ENCODE measurements at regions of chr7 and their contacts with region 1.

Region 1: GRCh38 chr7:143380255-143380645 is 895 bp upstream of the ZYX start:
- DNase-seq: peak; percentile 93
- ATAC-seq: peak; percentile 57
- H3K4me3 Mint-ChIP-seq: peak overlapping the region; percentile 82
- H3K27ac Mint-ChIP-seq: peak overlapping the region; percentile 89
- H3K4me1 Mint-ChIP-seq: peaks cover 39% of the 10 kb centered on the region
- H3K27me3 Mint-ChIP-seq: no peaks in the 10 kb centered on the region

Region 2: DNA sequence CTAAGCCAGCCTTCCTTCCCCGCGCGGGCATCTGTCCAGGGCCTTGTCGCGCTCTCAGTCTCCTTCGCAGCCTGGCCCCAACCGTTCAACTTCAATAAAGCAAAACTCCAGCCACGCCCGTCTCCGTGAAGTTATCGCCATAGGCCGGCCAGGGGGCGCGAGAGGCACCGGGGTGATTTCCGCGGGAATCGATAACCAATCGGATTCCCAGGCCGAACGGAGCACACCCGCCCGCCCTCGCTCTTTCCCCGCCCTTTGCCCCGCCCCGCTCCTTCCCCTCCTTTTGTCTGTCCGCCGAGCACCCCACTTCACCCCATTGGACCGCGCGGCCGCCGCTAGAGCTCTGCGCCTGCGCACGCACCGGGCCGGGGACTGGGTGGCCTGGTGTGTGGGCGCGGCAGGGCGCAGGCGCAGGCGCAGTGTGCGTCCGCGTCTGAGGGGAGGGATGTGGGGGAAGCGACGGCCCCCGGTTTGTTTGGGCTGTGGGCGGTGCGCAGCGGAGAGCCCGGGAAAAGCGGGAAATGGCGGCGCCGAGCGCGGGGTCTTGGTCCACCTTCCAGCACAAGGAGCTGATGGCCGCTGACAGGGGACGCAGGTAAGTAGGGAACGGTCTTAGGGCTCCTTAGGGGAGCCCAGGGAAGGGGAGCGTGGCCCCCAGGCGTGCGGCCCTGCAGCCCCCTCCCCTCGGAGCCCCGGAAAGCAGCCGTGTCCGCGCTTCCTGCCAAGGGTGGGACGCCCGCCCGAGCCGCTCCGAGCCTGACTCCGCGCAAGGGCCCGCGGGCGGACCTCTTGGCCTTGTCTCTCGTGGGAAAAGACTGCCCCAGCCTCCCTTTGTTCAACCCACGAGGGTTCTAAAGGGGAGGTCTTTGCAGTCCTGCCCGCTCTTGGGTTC is 92.1 kb before region 1 on chr7 and contains the start of gene CASP2:
- CTCF ChIA-PET with region 1: interaction called, 4 read pairs
- POLR2A ChIA-PET with region 1: no interaction called
- intact Hi-C with region 1: loop called (anchors 1 kb)
- DNase-seq: peak; percentile 100
- ATAC-seq: peak; percentile 94
- H3K4me3 Mint-ChIP-seq: peak within 1 kb of the TSS; percentile 89
- H3K27ac Mint-ChIP-seq: peak within 1 kb of the TSS; percentile 98
- H3K4me1 Mint-ChIP-seq: peaks cover 46% of the 10 kb centered on the region
- H3K27me3 Mint-ChIP-seq: no peaks in the 10 kb centered on the region
- total RNA-seq, gene CASP2: 91.1 to 106 TPM

Region 3: GRCh38 chr7:143362131-143363015 is 17.9 kb before region 1 on chr7 and contains the start of gene FAM131B:
- CTCF ChIA-PET with region 1: interaction called, 6 read pairs
- POLR2A ChIA-PET with region 1: no interaction called
- intact Hi-C with region 1: loop called (anchors 1 kb)
- DNase-seq: peak; percentile 60
- ATAC-seq: peak; percentile 74
- H3K4me3 Mint-ChIP-seq: peak within 1 kb of the TSS; percentile 77
- H3K27ac Mint-ChIP-seq: no peak within 1 kb of the TSS
- H3K4me1 Mint-ChIP-seq: peaks cover 3% of the 10 kb centered on the region
- H3K27me3 Mint-ChIP-seq: peaks cover 35% of the 10 kb centered on the region
- total RNA-seq, gene FAM131B: 1.7 to 1.8 TPM

Region 4: GRCh38 chr7:143408686-143409561 is 28.7 kb after region 1 on chr7 and contains the start of gene EPHA1:
- CTCF ChIA-PET with region 1: interaction called, 14 read pairs
- POLR2A ChIA-PET with region 1: interaction called, 7 read pairs
- intact Hi-C with region 1: loop called (anchors 1 to 2 kb)
- DNase-seq: peak; percentile 63
- ATAC-seq: peak; percentile 69
- H3K4me3 Mint-ChIP-seq: peak within 1 kb of the TSS; percentile 72
- H3K27ac Mint-ChIP-seq: peak within 1 kb of the TSS; percentile 68
- H3K4me1 Mint-ChIP-seq: peaks cover 54% of the 10 kb centered on the region
- H3K27me3 Mint-ChIP-seq: no peaks in the 10 kb centered on the region
- total RNA-seq, gene EPHA1: 2.4 to 2.8 TPM

Region 5: GRCh38 chr7:143901668-143902331 is 521.5 kb after region 1 on chr7 and contains the start of gene TCAF1:
- CTCF ChIA-PET with region 1: no interaction called
- POLR2A ChIA-PET with region 1: no interaction called
- intact Hi-C with region 1: loop called in 1 of 2 experiments (anchors 2 kb)
- DNase-seq: peak; percentile 95
- ATAC-seq: peak; percentile 95
- H3K4me3 Mint-ChIP-seq: peak within 1 kb of the TSS; percentile 88
- H3K27ac Mint-ChIP-seq: peak within 1 kb of the TSS; percentile 91
- H3K4me1 Mint-ChIP-seq: peaks cover 26% of the 10 kb centered on the region
- H3K27me3 Mint-ChIP-seq: no peaks in the 10 kb centered on the region
- total RNA-seq, gene TCAF1: 16.5 to 17.7 TPM